ENCODE measurements at regions of chr17 and their contacts with region 1.

Region 1: DNA sequence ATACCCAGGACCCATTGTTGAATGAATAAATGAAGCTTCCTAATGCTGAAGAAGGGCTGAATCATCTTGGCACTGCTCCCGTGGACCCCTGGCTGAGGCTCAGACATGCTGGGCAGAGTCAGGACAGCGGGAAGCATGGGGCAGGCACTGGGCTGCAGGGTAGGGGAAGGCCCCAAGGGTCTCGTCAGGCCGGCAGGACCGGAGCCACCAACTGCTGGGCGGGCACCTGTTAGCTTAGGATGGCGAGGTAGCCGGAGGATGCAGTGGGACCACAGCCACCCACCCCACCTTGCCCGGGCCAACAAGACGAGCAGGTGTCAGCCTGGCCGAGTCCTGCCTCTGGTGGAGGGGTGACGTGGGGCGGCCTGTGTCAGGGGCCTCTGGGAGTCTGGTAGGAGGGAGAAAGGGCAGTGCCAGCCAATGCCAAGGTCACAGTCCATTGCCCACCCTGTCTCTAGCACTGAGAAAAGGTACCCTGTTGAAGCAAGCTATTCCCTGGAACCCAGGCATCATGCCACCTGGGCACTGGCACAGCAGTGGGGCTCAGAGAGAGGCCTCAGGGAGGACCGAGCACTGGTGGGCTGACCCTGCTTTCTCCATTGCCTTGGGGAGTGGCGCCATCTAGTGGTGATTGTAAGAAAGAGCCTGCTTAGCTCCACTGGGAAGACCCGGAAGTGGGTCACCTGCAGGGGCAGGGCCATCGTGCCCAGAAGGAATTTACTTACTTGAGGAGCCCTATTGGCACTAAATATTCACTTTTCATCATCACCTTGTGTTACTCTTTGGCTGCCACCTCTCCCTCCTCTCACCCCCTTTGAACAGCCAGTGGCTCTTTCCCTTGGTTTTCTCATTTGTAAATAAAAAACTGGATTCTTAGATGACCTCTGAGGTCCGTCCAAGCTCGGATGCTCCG is 3.0 kb upstream of the DLX3 start:
- DNase-seq: peak; percentile 92
- H3K4me3 Mint-ChIP-seq: no peak overlapping the region
- H3K27ac Mint-ChIP-seq: peak overlapping the region; percentile 31
- H3K4me1 Mint-ChIP-seq: peaks cover 33% of the 10 kb centered on the region
- H3K27me3 Mint-ChIP-seq: peaks cover 64% of the 10 kb centered on the region

Region 2: DNA sequence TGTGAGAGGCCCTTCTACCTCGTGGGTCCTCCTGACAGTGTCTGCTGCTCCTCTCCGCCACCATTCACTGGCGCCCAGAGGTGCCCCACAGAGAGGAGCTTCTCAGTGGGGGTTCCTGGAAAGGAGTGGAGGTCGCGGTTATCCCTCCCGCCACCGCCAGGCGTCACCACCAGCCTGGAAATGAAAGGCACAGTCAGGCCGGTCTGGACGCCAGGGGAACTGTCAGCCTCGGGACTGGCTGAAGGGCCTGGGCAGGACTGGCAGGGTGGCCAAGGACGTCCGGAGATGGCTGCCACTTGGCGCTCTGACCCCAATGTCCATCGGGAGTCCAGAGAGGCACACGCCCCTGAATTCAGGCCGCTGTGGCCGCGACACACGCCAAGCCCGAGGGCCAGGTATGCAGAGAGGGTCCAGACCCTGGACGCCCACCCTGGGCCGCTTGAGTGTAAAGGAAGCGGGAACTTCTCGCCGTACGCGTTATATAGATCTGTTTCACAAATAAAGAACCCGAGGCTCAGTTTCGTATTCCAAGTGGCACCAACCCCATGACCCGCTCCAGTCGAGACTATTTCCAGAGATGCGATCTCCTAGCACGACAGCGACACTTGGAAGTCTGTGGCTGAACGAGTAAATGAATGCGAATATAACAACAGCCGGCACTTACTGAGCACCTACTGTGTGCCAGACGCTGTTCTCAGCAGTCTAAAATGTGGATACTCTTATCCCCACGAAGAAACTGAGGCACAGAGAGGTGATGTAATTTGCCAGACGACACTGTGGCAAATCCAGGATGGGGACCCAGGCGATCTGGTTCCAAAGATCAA is 430.0 kb before region 1 on chr17:
- CTCF ChIA-PET with region 1: interaction called, 14 read pairs
- POLR2A ChIA-PET with region 1: no interaction called
- DNase-seq: peak; percentile 83
- H3K4me3 Mint-ChIP-seq: peak overlapping the region; percentile 37
- H3K27ac Mint-ChIP-seq: no peak overlapping the region
- H3K4me1 Mint-ChIP-seq: peaks cover 31% of the 10 kb centered on the region
- H3K27me3 Mint-ChIP-seq: peaks cover 32% of the 10 kb centered on the region

Region 3: DNA sequence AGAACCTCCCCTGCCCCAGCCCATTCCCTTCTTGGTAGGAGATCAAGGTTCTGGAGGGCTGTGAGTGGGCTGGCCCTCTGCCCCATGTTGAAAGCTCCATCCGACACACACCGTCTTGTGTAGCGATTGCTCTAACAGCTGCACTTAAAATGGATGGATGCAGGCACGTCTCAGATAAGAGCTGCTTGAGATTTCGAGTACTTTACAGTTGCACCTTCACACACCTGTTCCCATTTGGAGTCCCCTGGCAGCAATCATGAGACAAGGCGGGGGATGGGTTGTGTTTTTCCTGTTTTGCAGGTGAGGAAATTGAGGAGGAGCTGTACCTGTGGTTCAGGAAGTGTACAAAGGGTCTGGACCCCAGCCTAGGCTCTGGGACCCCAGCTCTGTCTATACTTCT is 124.6 kb before region 1 on chr17:
- CTCF ChIA-PET with region 1: interaction called, 34 read pairs
- POLR2A ChIA-PET with region 1: no interaction called
- DNase-seq: no peak
- H3K4me3 Mint-ChIP-seq: no peak overlapping the region
- H3K27ac Mint-ChIP-seq: no peak overlapping the region
- H3K4me1 Mint-ChIP-seq: peaks cover 14% of the 10 kb centered on the region
- H3K27me3 Mint-ChIP-seq: peaks cover 3% of the 10 kb centered on the region

Region 4: DNA sequence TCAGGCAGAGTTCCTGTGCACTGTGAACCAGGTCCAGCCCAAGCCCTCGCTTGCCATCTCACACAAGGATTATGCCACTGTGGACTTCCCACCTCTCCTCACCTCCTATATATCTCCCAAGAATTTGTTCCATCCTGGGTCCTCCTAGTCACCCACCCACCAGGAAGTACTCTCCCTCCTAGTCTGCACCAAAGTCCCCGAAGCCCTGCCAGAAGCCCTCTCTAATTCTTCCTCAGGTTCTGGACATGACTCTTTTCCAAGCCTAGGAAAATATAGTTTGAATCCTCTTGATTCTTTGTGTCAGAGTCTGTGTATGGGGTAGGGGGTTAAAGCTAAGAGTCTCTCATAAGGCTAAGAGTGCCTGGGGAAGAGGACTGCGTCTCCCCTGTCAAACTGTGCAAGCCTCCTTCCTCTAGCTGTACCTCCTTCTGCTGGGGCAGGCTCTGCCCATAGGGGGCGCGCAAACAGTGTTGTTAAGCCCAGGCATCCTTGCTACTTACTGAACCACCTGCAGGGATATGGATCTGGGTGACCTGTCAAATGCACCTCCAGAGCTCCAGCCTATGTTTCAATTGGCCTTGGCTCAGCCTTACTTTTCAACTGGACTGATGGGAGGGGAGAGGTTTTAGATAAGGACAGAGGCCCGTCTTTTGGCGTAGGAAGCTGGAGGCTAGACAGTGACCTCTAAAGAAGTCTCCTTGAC is 45.7 kb before region 1 on chr17:
- CTCF ChIA-PET with region 1: interaction called, 31 read pairs
- POLR2A ChIA-PET with region 1: no interaction called
- DNase-seq: peak; percentile 87
- H3K4me3 Mint-ChIP-seq: no peak overlapping the region
- H3K27ac Mint-ChIP-seq: no peak overlapping the region
- H3K4me1 Mint-ChIP-seq: no peaks in the 10 kb centered on the region
- H3K27me3 Mint-ChIP-seq: peaks cover 28% of the 10 kb centered on the region

Region 5: GRCh38 chr17:49980703-49981197 is 17.3 kb before region 1 on chr17:
- CTCF ChIA-PET with region 1: interaction called, 41 read pairs
- POLR2A ChIA-PET with region 1: no interaction called
- DNase-seq: no peak
- H3K4me3 Mint-ChIP-seq: no peak overlapping the region
- H3K27ac Mint-ChIP-seq: no peak overlapping the region
- H3K4me1 Mint-ChIP-seq: no peaks in the 10 kb centered on the region
- H3K27me3 Mint-ChIP-seq: peaks cover 30% of the 10 kb centered on the region

Region 6: GRCh38 chr17:50035421-50035879 is 37.4 kb after region 1 on chr17:
- CTCF ChIA-PET with region 1: no interaction called
- POLR2A ChIA-PET with region 1: no interaction called
- DNase-seq: no peak
- H3K4me3 Mint-ChIP-seq: no peak overlapping the region
- H3K27ac Mint-ChIP-seq: no peak overlapping the region
- H3K4me1 Mint-ChIP-seq: no peaks in the 10 kb centered on the region
- H3K27me3 Mint-ChIP-seq: peaks cover 12% of the 10 kb centered on the region

Region 7: GRCh38 chr17:50094753-50095619 is 96.9 kb after region 1 on chr17 and contains the start of gene PDK2:
- CTCF ChIA-PET with region 1: interaction called, 14 read pairs
- POLR2A ChIA-PET with region 1: no interaction called
- DNase-seq: peak; percentile 97
- H3K4me3 Mint-ChIP-seq: peak within 1 kb of the TSS; percentile 96
- H3K27ac Mint-ChIP-seq: peak within 1 kb of the TSS; percentile 93
- H3K4me1 Mint-ChIP-seq: peaks cover 27% of the 10 kb centered on the region
- H3K27me3 Mint-ChIP-seq: peaks cover 5% of the 10 kb centered on the region
- total RNA-seq, gene PDK2: 29.4 to 31.3 TPM

Region 8: GRCh38 chr17:50238601-50239280 is 240.7 kb after region 1 on chr17:
- CTCF ChIA-PET with region 1: no interaction called
- POLR2A ChIA-PET with region 1: no interaction called
- DNase-seq: no peak
- H3K4me3 Mint-ChIP-seq: no peak overlapping the region
- H3K27ac Mint-ChIP-seq: no peak overlapping the region
- H3K4me1 Mint-ChIP-seq: no peaks in the 10 kb centered on the region
- H3K27me3 Mint-ChIP-seq: peaks cover 53% of the 10 kb centered on the region

Measured in activated CD4-positive, alpha-beta T cell treated with anti-CD3 and anti-CD28 coated beads, Interleukin-2, amount 10 ng/mL, durations not matched to agents 7 days and 5 days (primary cell).